Endothelial cell of umbilical vein (primary cell): ENCODE measurements at regions of chr7 and their contacts with region 1.

Region 1: DNA sequence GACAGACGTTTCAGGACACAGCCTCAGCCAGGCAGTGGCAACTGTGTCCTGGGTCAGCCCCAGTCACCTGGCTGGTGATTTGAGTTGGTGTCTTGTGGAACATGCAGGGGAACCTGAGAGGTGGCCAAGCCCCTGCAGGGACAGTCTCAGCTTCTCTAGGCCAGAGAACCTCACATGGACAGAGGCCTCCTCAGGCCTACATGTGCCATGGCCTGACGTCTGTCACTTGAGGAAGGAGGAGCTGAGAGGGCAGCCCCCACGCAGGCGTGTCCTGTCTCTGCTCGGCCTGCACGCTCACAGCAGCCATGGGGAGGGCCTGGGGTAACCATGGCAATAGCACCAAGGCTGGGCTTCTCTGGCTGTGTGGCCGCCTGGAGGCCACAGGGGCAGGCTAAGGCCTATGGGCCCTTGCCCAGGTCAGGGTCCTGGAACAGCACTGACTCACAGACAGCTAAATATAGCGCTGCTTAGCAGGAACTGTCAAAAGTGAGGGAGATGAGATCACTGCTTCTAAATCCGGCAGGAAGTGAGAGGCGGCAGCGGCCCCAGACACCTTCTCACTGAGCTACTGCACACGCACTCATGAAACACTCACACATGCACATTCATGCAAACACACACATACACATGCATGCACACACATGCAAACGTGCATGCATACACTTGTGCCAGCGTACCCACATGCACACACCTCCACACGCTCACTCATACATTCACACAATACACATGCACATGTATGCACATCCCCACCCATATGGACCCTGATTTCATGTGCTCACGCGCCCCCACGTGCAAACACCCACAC is 57.0 kb downstream of the YKT6 start:
- DNase-seq: peak; percentile 89
- H3K4me3 ChIP-seq: no peak overlapping the region
- H3K27ac ChIP-seq: peak overlapping the region; percentile 86
- H3K4me1 ChIP-seq: peaks cover 29% of the 10 kb centered on the region
- H3K27me3 ChIP-seq: no peaks in the 10 kb centered on the region
- CTCF ChIP-seq: no peak
- POLR2A ChIP-seq: no peak

Region 2: DNA sequence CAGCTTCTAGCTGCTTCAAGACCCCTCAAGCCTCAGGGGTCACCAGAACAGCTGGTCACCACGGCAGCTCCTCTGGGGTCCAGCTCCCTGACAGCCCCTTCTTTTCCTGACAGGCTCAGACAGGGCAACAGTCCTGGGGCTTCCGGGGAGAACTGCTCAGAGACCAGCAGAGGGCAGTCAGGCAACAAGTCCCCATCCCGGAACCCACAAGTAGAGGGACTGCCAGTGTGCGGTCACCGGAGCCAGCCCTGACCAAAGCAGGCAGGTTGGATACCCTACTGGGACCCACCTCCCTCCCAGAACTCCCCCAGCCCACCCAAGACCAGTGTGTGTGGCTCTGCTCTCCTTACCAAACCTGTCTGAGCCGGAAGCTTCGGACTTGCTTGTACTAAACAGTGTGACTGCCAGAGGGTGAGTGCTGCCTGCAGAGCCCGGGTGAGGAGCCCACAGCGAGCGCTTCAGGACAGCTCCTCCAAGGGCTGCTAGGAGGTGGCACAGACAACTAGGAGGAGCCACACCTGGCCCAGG is 16.8 kb before region 1 on chr7:
- CTCF ChIA-PET with region 1: interaction called, 27 read pairs
- POLR2A ChIA-PET with region 1: no interaction called
- dilution Hi-C with region 1: no loop called
- intact Hi-C with region 1: no loop called
- DNase-seq: peak; percentile 63
- H3K4me3 ChIP-seq: no peak overlapping the region
- H3K27ac ChIP-seq: no peak overlapping the region
- H3K4me1 ChIP-seq: no peaks in the 10 kb centered on the region
- H3K27me3 ChIP-seq: no peaks in the 10 kb centered on the region
- CTCF ChIP-seq: peak; percentile 71 to 76
- POLR2A ChIP-seq: no peak

Region 3: DNA sequence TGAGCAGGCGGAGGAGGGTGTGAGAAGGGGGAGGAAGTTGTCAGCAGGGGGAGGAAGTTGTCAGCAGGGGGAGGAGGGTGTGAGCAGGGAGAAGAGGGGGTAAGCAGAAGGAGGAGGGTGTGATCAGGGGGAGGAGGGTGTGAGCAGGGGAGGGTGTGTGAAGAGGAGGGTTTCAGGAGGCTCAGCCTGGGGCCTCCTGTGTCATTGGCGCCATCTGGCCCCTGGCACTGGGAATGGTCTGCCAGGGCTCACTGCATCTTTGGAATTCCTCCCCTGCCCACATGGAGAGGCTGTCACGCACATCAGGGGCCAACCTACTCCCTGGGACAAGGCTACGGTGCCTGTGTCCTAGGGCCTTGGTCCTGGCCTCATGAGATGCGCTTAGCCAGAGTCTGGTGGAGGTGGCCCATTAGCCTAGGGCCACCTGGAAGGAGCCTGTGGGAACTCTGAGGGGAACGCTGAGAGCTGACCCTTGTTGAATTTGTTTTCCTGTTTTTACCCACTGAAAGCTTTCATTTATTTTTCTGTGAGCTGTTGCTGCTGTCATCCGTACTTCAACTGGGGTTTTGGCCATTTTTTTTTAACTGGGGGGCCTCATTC is 49.6 kb after region 1 on chr7:
- CTCF ChIA-PET with region 1: interaction called, 3 read pairs
- POLR2A ChIA-PET with region 1: no interaction called
- dilution Hi-C with region 1: no loop called
- intact Hi-C with region 1: loop called (anchors 5 kb)
- DNase-seq: peak; percentile 44
- H3K4me3 ChIP-seq: no peak overlapping the region
- H3K27ac ChIP-seq: no peak overlapping the region
- H3K4me1 ChIP-seq: peaks cover 9% of the 10 kb centered on the region
- H3K27me3 ChIP-seq: no peaks in the 10 kb centered on the region
- CTCF ChIP-seq: peak; percentile 37 to 63
- POLR2A ChIP-seq: no peak

Region 4: DNA sequence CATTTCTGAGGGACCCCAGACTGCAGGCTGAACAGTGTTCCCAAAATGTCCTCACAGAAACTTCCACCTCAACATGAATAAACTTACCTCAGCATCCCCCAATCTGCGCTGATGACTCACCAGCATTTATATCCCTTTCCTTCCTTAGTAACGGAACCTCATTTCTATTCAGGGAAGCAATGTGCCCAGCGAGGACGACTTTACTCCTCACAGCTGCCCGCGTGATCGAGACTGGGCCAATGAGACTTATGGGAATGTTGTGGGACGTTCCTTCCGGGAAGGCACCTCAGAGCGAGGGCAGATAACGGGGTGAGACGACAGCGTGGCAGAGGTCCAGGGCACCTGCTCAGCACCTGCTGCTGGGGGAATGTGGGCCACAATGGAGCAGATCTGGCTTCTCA is 140.7 kb after region 1 on chr7:
- CTCF ChIA-PET with region 1: no interaction called
- POLR2A ChIA-PET with region 1: no interaction called
- dilution Hi-C with region 1: no loop called
- intact Hi-C with region 1: loop called (anchors 1 kb)
- DNase-seq: peak; percentile 98
- H3K4me3 ChIP-seq: peak overlapping the region in 1 of 3 experiments; percentile 10
- H3K27ac ChIP-seq: peak overlapping the region; percentile 88
- H3K4me1 ChIP-seq: peaks cover 31% of the 10 kb centered on the region
- H3K27me3 ChIP-seq: no peaks in the 10 kb centered on the region
- CTCF ChIP-seq: no peak
- POLR2A ChIP-seq: no peak